GM12878 (cell line): ENCODE measurements at regions of chr6 and their contacts with region 1.

Region 1: GRCh38 chr6:6856538-6857523 is 250.9 kb upstream of the RREB1 start:
- DNase-seq: peak; percentile 71
- ATAC-seq: peak; percentile 92
- H3K4me3 ChIP-seq: peak overlapping the region; percentile 25; the same call in 1 of the 2 replicates
- H3K27ac ChIP-seq: peak overlapping the region; percentile 64
- H3K4me1 ChIP-seq: peaks cover 14% of the 10 kb centered on the region
- H3K27me3 ChIP-seq: no peaks in the 10 kb centered on the region
- CTCF ChIP-seq: no peak
- EP300 ChIP-seq: peak in 1 of 2 experiments; percentile 43; a peak in 1 of 4 replicates
- POLR2A ChIP-seq: peak; percentile 69
- RAD21 ChIP-seq: no peak

Region 2: DNA sequence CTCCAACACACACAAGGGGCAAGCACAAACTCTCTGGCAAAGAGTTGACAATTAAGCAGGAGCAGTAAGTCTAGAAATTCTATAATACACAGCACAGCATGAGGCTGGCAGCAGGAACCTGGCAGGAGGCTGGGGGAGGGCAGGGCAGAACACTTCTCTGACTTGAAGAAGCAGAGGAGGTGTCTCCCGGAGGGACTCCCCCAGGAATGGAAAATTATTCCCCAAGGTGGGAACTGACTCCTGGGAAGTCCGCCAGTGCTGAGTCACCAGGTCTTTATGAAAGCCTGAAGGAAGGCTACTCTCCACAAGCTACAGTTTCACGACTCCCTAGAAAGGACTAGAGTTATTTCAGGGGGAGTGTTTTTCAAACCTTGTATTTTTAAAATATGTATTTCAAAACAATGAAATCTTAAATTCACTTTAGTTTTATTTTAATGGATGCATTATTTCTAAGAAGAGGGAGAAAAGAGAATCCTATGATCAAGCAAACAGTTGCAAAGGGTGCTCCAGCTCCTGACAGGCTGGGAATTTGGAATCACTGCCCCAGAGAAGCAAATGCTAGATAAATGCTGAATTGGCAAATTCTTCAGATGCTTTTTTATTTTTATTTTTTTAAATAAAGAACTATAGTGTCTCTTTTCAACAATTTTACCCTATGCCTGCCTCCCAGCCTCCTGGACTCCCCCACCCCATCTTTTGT is 75.5 kb before region 1 on chr6:
- CTCF ChIA-PET with region 1: no interaction called
- POLR2A ChIA-PET with region 1: no interaction called
- RAD21 ChIA-PET with region 1: no interaction called
- SMC1A ChIA-PET with region 1: no interaction called
- in situ Hi-C with region 1: no loop called
- intact Hi-C with region 1: no loop called
- DNase-seq: no peak
- ATAC-seq: no peak
- H3K4me3 ChIP-seq: no peak overlapping the region
- H3K27ac ChIP-seq: no peak overlapping the region
- H3K4me1 ChIP-seq: no peaks in the 10 kb centered on the region
- H3K27me3 ChIP-seq: peaks cover 0 to 5% of the 10 kb centered on the region in 2 experiments; a peak in 1 of 4 replicates
- CTCF ChIP-seq: no peak
- EP300 ChIP-seq: no peak
- POLR2A ChIP-seq: no peak
- RAD21 ChIP-seq: no peak

Region 3: GRCh38 chr6:6803572-6803971 is 53.3 kb before region 1 on chr6:
- CTCF ChIA-PET with region 1: interaction called, 3 read pairs
- POLR2A ChIA-PET with region 1: interaction called, 4 read pairs
- RAD21 ChIA-PET with region 1: interaction called, 16 read pairs
- SMC1A ChIA-PET with region 1: interaction called, 8 read pairs
- in situ Hi-C with region 1: no loop called
- intact Hi-C with region 1: loop called (anchors 5 kb)
- DNase-seq: no peak
- ATAC-seq: peak; percentile 77
- H3K4me3 ChIP-seq: no peak overlapping the region
- H3K27ac ChIP-seq: no peak overlapping the region
- H3K4me1 ChIP-seq: peaks cover 60% of the 10 kb centered on the region
- H3K27me3 ChIP-seq: no peaks in the 10 kb centered on the region
- CTCF ChIP-seq: no peak
- EP300 ChIP-seq: no peak
- POLR2A ChIP-seq: no peak
- RAD21 ChIP-seq: no peak

Region 4: GRCh38 chr6:6816716-6817115 is 40.1 kb before region 1 on chr6:
- CTCF ChIA-PET with region 1: no interaction called
- POLR2A ChIA-PET with region 1: no interaction called
- RAD21 ChIA-PET with region 1: no interaction called
- SMC1A ChIA-PET with region 1: interaction called, 8 read pairs
- in situ Hi-C with region 1: no loop called
- intact Hi-C with region 1: loop called (anchors 5 kb)
- DNase-seq: no peak
- ATAC-seq: peak; percentile 73
- H3K4me3 ChIP-seq: no peak overlapping the region
- H3K27ac ChIP-seq: peak overlapping the region; percentile 62
- H3K4me1 ChIP-seq: peaks cover 21% of the 10 kb centered on the region
- H3K27me3 ChIP-seq: no peaks in the 10 kb centered on the region
- CTCF ChIP-seq: no peak
- EP300 ChIP-seq: no peak
- POLR2A ChIP-seq: no peak
- RAD21 ChIP-seq: no peak

Region 5: DNA sequence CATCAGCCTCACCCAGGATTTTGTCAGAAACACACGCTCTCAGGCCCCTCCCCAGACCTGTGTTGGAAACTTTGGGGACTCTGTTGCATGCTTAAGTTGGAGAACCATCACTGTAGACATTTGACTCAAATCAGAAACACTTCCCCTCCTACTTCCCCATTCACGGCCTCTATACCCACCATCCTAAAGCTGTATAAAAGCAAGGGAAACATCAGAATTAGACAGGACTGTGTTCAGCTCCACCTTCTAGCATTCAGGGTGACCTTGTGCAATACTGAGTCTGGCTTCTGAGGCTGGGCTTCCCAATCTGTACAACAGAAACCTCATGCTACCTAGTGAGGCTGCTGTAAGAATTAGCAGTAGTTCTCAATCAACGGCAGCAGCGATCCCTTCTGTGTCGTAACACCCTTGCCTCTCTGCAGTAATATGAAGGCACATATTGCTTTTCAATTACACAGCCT is 16.0 kb before region 1 on chr6:
- CTCF ChIA-PET with region 1: interaction called, 5 read pairs
- POLR2A ChIA-PET with region 1: interaction called, 4 read pairs
- RAD21 ChIA-PET with region 1: interaction called, 4 read pairs
- SMC1A ChIA-PET with region 1: interaction called, 10 read pairs
- in situ Hi-C with region 1: no loop called
- intact Hi-C with region 1: no loop called
- DNase-seq: no peak
- ATAC-seq: peak; percentile 94
- H3K4me3 ChIP-seq: no peak overlapping the region
- H3K27ac ChIP-seq: no peak overlapping the region
- H3K4me1 ChIP-seq: peaks cover 9% of the 10 kb centered on the region
- H3K27me3 ChIP-seq: no peaks in the 10 kb centered on the region
- CTCF ChIP-seq: no peak
- EP300 ChIP-seq: peak in 1 of 2 experiments; percentile 67; a peak in 2 of 4 replicates
- POLR2A ChIP-seq: no peak
- RAD21 ChIP-seq: no peak

Region 6: DNA sequence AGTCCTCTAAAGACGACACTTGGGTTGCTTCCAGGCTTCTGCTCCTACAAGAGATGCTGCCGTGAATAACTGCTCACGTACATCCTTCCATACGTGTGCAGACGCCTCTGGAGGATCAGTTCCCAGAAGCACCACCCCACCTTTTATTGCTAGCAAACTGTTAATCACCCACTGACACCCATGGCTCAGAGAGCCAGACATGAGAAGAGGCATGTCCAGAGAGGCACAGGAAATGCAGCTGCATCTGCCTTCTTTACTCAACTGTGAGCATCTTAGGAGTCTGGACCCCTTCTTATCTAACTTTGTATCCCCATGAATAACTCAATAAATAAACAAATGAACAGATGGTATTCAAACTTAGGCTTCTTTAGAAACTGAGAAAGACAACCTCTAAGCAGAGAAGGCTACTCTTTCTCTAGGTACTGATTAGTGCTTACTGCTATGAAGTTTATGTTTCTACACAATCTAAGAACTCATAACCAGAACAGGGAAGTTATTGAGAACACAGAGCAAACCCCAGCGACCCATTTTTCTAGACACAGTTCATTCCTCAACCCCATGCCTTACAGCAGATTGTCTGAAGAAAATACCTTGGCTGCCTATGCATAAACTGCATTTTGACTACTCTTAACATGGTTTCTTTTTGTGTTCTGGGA is 22.2 kb after region 1 on chr6:
- CTCF ChIA-PET with region 1: interaction called, 4 read pairs
- POLR2A ChIA-PET with region 1: interaction called, 5 read pairs
- RAD21 ChIA-PET with region 1: no interaction called
- SMC1A ChIA-PET with region 1: interaction called, 12 read pairs
- in situ Hi-C with region 1: no loop called
- intact Hi-C with region 1: no loop called
- DNase-seq: no peak
- ATAC-seq: peak; percentile 73
- H3K4me3 ChIP-seq: no peak overlapping the region
- H3K27ac ChIP-seq: no peak overlapping the region
- H3K4me1 ChIP-seq: peaks cover 8% of the 10 kb centered on the region
- H3K27me3 ChIP-seq: no peaks in the 10 kb centered on the region
- CTCF ChIP-seq: no peak
- EP300 ChIP-seq: no peak
- POLR2A ChIP-seq: no peak
- RAD21 ChIP-seq: no peak

Region 7: GRCh38 chr6:6998194-6998569 is 141.4 kb after region 1 on chr6:
- CTCF ChIA-PET with region 1: no interaction called
- POLR2A ChIA-PET with region 1: no interaction called
- RAD21 ChIA-PET with region 1: no interaction called
- SMC1A ChIA-PET with region 1: no interaction called
- in situ Hi-C with region 1: no loop called
- intact Hi-C with region 1: no loop called
- DNase-seq: no peak
- ATAC-seq: no peak
- H3K4me3 ChIP-seq: no peak overlapping the region
- H3K27ac ChIP-seq: no peak overlapping the region
- H3K4me1 ChIP-seq: no peaks in the 10 kb centered on the region
- H3K27me3 ChIP-seq: no peaks in the 10 kb centered on the region
- CTCF ChIP-seq: no peak
- EP300 ChIP-seq: no peak
- POLR2A ChIP-seq: no peak
- RAD21 ChIP-seq: no peak